ENCODE measurements at regions of chr20 and their contacts with region 1.

Region 1: GRCh38 chr20:39049684-39050554 is 87.8 kb downstream of the DHX35 start:
- DNase-seq: peak; percentile 55 to 90 (median 76)
- ATAC-seq: peak; percentile 88
- H3K4me3 ChIP-seq: peak overlapping the region; percentile 79
- H3K4me3 Mint-ChIP-seq: peak overlapping the region; percentile 84
- H3K27ac ChIP-seq: peak overlapping the region in 1 of 2 donors; percentile 35
- H3K27ac Mint-ChIP-seq: peak overlapping the region; percentile 25
- H3K4me1 ChIP-seq: peaks cover 15% of the 10 kb centered on the region
- H3K4me1 Mint-ChIP-seq: peaks cover 11% of the 10 kb centered on the region
- H3K27me3 ChIP-seq: peaks cover 0 to 2% of the 10 kb centered on the region in 2 experiments
- H3K27me3 Mint-ChIP-seq: no peaks in the 10 kb centered on the region
- CTCF ChIP-seq: peak; percentile 99

Region 2: GRCh38 chr20:38926142-38926933 is 123.6 kb before region 1 on chr20 and contains the start of gene FAM83D:
- CTCF ChIA-PET with region 1: interaction called, 4 read pairs
- POLR2A ChIA-PET with region 1: no interaction called
- intact Hi-C with region 1: loop called in 1 of 2 experiments (anchors 2 kb)
- DNase-seq: peak; percentile 83 to 97 (median 90)
- ATAC-seq: peak; percentile 95
- H3K4me3 ChIP-seq: peak within 1 kb of the TSS; percentile 74
- H3K4me3 Mint-ChIP-seq: peak within 1 kb of the TSS; percentile 90
- H3K27ac ChIP-seq: peak within 1 kb of the TSS in 1 of 2 donors; percentile 7
- H3K27ac Mint-ChIP-seq: peak within 1 kb of the TSS; percentile 76
- H3K4me1 ChIP-seq: peaks cover 37% of the 10 kb centered on the region
- H3K4me1 Mint-ChIP-seq: peaks cover 31% of the 10 kb centered on the region
- H3K27me3 ChIP-seq: no peaks in the 10 kb centered on the region
- H3K27me3 Mint-ChIP-seq: no peaks in the 10 kb centered on the region
- CTCF ChIP-seq: peak; percentile 43
- total RNA-seq, gene FAM83D: 1.8 to 1.9 TPM

Region 3: DNA sequence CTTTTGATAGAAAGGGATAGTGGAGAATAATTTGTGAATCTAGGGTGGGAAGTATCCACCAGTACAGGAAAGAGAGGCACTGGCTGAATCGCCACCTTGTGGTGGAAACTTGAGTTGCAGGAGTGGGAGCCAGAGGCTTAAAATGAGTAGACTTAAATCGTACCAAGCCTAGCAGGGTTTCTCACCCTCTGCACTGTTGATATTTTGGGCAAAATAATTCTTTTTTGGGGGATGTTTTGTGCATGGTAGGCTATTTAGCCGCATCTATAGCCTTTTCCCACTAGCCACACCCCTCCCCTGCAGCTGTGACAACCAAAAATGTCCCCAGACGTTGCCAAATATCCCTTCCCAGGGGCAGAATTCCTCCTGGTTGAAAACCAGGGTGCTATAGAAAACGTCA is 31.3 kb after region 1 on chr20:
- CTCF ChIA-PET with region 1: interaction called, 24 read pairs
- POLR2A ChIA-PET with region 1: interaction called, 4 read pairs
- intact Hi-C with region 1: loop called (anchors 1 kb)
- DNase-seq: peak; percentile 67 to 89 (median 80)
- ATAC-seq: peak; percentile 68
- H3K4me3 ChIP-seq: no peak overlapping the region
- H3K4me3 Mint-ChIP-seq: no peak overlapping the region
- H3K27ac ChIP-seq: no peak overlapping the region
- H3K27ac Mint-ChIP-seq: no peak overlapping the region
- H3K4me1 ChIP-seq: no peaks in the 10 kb centered on the region
- H3K4me1 Mint-ChIP-seq: peaks cover 4% of the 10 kb centered on the region
- H3K27me3 ChIP-seq: peaks cover 0 to 14% of the 10 kb centered on the region in 2 experiments
- H3K27me3 Mint-ChIP-seq: peaks cover 40% of the 10 kb centered on the region
- CTCF ChIP-seq: peak; percentile 83

Measured in CD4-positive, alpha-beta T cell (primary cell).